MCF 10A (cell line): ENCODE measurements at regions of chr10 and their contacts with region 1.

Region 1: DNA sequence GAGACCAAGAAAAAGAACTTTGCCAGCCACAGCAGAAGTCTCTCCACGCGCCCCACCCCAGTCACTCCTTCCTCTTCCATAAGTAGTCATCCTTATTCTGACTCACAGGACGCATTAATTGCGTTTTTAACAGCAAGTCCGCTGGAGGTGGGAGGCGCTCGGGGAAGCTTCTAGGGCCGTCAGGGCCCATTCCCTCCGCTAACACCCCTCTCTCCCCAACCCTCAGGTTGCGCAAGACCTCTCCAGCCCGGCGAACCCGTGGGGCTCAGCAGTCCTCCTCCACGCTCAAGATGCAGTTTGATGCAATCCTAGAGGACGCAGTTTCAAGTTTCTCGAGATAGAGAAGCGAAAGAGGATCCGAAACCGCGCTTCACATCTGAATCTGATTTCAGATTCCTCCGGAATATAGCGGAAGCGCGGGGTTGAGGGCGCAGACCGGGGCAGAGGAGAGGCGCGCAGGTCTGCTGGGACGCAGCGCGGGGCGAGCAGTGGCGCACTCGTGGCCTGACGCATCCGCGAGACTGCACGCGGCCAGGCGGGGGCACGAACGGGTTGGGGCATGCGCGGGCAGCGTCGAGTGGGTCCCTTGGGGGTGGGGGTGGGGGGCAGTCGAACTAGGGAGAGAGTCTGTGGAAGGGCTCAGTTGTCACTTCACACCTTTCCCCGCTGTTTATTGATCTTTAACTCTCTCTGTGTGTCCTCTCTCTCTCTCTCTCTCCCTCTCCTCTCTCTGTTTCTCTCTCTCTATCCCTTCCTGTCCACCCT is 37.8 kb upstream of the PSAP start:
- DNase-seq: peak; percentile 83
- H3K4me3 Mint-ChIP-seq: peak overlapping the region; percentile 96
- H3K27ac Mint-ChIP-seq: peak overlapping the region; percentile 96
- H3K4me1 Mint-ChIP-seq: peaks cover 11% of the 10 kb centered on the region
- H3K27me3 Mint-ChIP-seq: no peaks in the 10 kb centered on the region
- CTCF ChIP-seq: no peak

Region 2: GRCh38 chr10:71829171-71829570 is 59.6 kb before region 1 on chr10:
- CTCF ChIA-PET with region 1: interaction called, 5 read pairs
- POLR2A ChIA-PET with region 1: interaction called, 5 read pairs
- intact Hi-C with region 1: loop called (anchors 2 kb)
- DNase-seq: no peak
- H3K4me3 Mint-ChIP-seq: no peak overlapping the region
- H3K27ac Mint-ChIP-seq: no peak overlapping the region
- H3K4me1 Mint-ChIP-seq: peaks cover 12% of the 10 kb centered on the region
- H3K27me3 Mint-ChIP-seq: no peaks in the 10 kb centered on the region
- CTCF ChIP-seq: no peak

Region 3: GRCh38 chr10:71835671-71836595 is 52.9 kb before region 1 on chr10:
- CTCF ChIA-PET with region 1: interaction called, 10 read pairs
- POLR2A ChIA-PET with region 1: interaction called, 5 read pairs
- intact Hi-C with region 1: loop called (anchors 2 kb)
- DNase-seq: peak; percentile 69
- H3K4me3 Mint-ChIP-seq: no peak overlapping the region
- H3K27ac Mint-ChIP-seq: peak overlapping the region; percentile 84
- H3K4me1 Mint-ChIP-seq: peaks cover 58% of the 10 kb centered on the region
- H3K27me3 Mint-ChIP-seq: no peaks in the 10 kb centered on the region
- CTCF ChIP-seq: no peak

Region 4: GRCh38 chr10:71850637-71851464 is 38.0 kb before region 1 on chr10 and contains the start of gene PSAP:
- CTCF ChIA-PET with region 1: interaction called, 7 read pairs
- POLR2A ChIA-PET with region 1: interaction called, 11 read pairs
- intact Hi-C with region 1: loop called (anchors 1 kb)
- DNase-seq: peak; percentile 99
- H3K4me3 Mint-ChIP-seq: peak within 1 kb of the TSS; percentile 80
- H3K27ac Mint-ChIP-seq: peak within 1 kb of the TSS; percentile 94
- H3K4me1 Mint-ChIP-seq: peaks cover 42% of the 10 kb centered on the region
- H3K27me3 Mint-ChIP-seq: no peaks in the 10 kb centered on the region
- CTCF ChIP-seq: no peak
- total RNA-seq, gene PSAP: 506 and 692 TPM in 2 replicates

Region 5: DNA sequence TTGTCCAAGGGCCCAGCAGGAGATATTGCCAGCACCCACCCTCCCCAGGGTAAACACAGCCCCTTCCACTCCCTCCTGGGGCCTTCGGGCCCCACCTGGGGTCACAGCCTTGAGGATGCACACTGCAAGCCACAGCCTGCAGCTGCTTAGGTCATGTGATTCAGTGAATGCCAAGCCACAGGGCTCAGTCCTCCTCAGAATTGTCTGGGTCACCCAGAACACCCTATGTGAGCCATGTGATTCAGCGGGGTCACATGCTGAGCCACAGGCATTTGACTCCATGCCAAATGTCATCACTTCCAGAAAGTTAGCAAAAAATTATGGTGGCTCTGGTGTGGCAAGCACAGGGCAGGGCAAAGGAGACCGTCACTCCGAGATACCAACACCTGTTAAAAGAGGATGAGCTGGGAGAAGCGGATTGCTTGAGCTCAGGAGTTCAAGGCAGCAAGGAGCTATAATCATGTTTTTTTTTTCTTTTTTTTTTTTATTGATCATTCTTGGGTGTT is 20.6 kb before region 1 on chr10:
- CTCF ChIA-PET with region 1: interaction called, 6 read pairs
- POLR2A ChIA-PET with region 1: interaction called, 15 read pairs
- intact Hi-C with region 1: no loop called
- DNase-seq: peak; percentile 91
- H3K4me3 Mint-ChIP-seq: peak overlapping the region; percentile 44
- H3K27ac Mint-ChIP-seq: peak overlapping the region; percentile 92
- H3K4me1 Mint-ChIP-seq: peaks cover 24% of the 10 kb centered on the region
- H3K27me3 Mint-ChIP-seq: no peaks in the 10 kb centered on the region
- CTCF ChIP-seq: no peak